Caco-2 (cell line): ENCODE measurements at regions of chr20 and their contacts with region 1.

Region 1: DNA sequence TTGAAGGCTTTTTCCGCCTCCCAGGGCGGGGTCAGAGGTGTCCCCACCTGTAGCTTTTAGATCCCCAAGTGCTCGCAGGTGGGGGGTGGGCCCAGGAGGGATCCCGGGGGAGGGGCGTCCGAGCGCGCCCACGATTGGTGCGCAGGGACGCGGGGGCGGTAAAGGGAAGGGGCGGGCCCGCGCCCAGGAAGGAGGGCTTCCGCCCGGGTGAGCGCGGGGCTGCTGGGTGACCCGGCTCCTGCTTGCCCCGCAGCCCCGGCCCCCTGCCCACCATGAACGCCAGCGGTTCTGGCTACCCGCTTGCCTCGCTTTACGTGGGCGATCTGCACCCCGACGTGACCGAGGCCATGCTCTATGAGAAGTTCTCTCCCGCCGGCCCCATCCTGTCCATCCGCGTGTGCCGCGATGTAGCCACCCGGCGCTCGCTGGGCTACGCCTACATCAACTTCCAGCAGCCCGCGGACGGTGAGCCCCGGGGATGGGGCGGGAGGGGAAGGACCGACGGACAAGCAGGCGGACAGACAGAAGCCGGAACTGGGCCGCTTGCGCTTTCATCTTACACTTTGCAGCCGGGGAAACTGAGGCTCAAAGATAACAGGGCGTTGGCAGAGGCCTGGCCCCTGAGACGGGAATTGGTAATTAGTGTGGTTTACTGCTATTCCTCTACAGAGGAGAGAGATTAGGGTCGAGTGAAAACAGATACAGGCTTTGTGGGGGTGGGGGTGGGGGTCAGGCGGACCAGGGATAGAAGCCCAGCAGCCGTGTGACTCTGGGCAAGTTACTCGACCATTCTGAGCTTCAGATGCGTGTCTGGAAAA is at the start of gene PABPC1L:
- DNase-seq: peak; percentile 95
- H3K4me3 ChIP-seq: peak within 1 kb of the TSS; percentile 82
- H3K4me3 Mint-ChIP-seq: peak within 1 kb of the TSS; percentile 85
- H3K27ac Mint-ChIP-seq: peak within 1 kb of the TSS; percentile 92
- H3K4me1 ChIP-seq: peaks cover 21% of the 10 kb centered on the region
- H3K4me1 Mint-ChIP-seq: peaks cover 19% of the 10 kb centered on the region
- H3K27me3 ChIP-seq: no peaks in the 10 kb centered on the region
- H3K27me3 Mint-ChIP-seq: no peaks in the 10 kb centered on the region
- CTCF ChIP-seq: no peak
- total RNA-seq, gene PABPC1L: 242 and 255 TPM in 2 replicates

Region 2: GRCh38 chr20:44692932-44693476 is 217.1 kb before region 1 on chr20:
- CTCF ChIA-PET with region 1: no interaction called
- POLR2A ChIA-PET with region 1: no interaction called
- intact Hi-C with region 1: loop called (anchors 1 kb)
- DNase-seq: peak; percentile 96 to 98
- H3K4me3 ChIP-seq: no peak overlapping the region
- H3K4me3 Mint-ChIP-seq: peak overlapping the region; percentile 64
- H3K27ac Mint-ChIP-seq: peak overlapping the region; percentile 87
- H3K4me1 ChIP-seq: peaks cover 21% of the 10 kb centered on the region
- H3K4me1 Mint-ChIP-seq: peaks cover 29% of the 10 kb centered on the region
- H3K27me3 ChIP-seq: no peaks in the 10 kb centered on the region
- H3K27me3 Mint-ChIP-seq: no peaks in the 10 kb centered on the region
- CTCF ChIP-seq: no peak

Region 3: DNA sequence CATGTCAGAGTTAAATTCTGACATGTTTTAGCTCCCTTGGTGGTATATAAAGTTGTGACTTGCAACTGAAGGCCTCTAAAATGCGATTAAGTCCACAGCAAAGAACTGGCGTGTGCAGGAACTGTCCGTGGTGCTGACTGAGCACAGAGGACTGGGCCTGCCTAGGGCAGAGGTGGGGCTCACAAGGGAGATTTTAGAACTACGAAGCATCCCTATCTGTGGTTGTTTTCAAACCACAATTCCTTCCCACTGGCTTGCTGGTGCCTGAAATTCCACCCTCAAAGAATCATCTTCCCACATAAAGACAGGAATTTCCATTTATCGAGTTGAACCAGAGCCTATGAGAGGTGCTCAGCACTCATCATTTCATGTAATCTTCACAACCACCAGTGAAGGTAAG is 129.9 kb before region 1 on chr20:
- CTCF ChIA-PET with region 1: no interaction called
- POLR2A ChIA-PET with region 1: no interaction called
- intact Hi-C with region 1: no loop called
- DNase-seq: peak; percentile 76 to 88
- H3K4me3 ChIP-seq: no peak overlapping the region
- H3K4me3 Mint-ChIP-seq: no peak overlapping the region
- H3K27ac Mint-ChIP-seq: no peak overlapping the region
- H3K4me1 ChIP-seq: no peaks in the 10 kb centered on the region
- H3K4me1 Mint-ChIP-seq: no peaks in the 10 kb centered on the region
- H3K27me3 ChIP-seq: no peaks in the 10 kb centered on the region
- H3K27me3 Mint-ChIP-seq: peaks cover 9% of the 10 kb centered on the region
- CTCF ChIP-seq: no peak

Region 4: DNA sequence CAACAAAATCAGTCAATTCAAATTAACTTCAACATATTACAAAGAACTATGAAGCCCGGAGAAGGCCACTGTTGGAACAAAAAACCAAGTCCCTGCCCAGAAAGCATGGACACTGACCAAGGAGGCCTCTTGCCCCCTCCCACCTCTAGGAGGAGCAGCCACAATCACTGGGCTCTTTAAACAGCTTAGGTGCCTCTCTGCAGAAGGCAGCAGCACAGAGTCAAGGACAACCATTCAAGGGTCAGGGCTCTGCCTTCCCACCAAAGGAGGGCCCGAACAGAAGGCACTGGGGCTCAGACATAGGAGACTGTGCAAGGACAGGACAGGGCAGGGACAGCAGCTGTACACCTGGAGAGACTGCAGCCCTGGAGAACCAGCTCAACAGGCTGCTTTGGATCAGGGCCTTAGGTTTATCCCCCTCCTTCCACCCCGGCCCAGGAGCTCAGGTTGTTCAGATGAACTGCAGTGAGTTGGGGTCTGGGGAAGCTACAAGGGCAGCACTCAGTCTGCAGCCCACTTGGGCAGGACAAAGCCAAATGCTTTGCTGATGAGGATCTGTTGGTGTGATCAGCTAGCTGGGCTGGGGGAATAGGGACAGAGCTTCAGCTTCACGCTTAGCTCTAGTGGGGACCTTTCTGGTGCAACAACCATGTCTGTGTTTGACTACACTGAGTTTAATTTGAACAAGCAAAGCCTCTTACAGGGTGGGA is 32.3 kb after region 1 on chr20:
- CTCF ChIA-PET with region 1: interaction called, 10 read pairs
- POLR2A ChIA-PET with region 1: interaction called, 7 read pairs
- intact Hi-C with region 1: no loop called
- DNase-seq: peak; percentile 68
- H3K4me3 ChIP-seq: no peak overlapping the region
- H3K4me3 Mint-ChIP-seq: no peak overlapping the region
- H3K27ac Mint-ChIP-seq: no peak overlapping the region
- H3K4me1 ChIP-seq: no peaks in the 10 kb centered on the region
- H3K4me1 Mint-ChIP-seq: peaks cover 6% of the 10 kb centered on the region
- H3K27me3 ChIP-seq: no peaks in the 10 kb centered on the region
- H3K27me3 Mint-ChIP-seq: no peaks in the 10 kb centered on the region
- CTCF ChIP-seq: peak; percentile 49 to 62

Region 5: DNA sequence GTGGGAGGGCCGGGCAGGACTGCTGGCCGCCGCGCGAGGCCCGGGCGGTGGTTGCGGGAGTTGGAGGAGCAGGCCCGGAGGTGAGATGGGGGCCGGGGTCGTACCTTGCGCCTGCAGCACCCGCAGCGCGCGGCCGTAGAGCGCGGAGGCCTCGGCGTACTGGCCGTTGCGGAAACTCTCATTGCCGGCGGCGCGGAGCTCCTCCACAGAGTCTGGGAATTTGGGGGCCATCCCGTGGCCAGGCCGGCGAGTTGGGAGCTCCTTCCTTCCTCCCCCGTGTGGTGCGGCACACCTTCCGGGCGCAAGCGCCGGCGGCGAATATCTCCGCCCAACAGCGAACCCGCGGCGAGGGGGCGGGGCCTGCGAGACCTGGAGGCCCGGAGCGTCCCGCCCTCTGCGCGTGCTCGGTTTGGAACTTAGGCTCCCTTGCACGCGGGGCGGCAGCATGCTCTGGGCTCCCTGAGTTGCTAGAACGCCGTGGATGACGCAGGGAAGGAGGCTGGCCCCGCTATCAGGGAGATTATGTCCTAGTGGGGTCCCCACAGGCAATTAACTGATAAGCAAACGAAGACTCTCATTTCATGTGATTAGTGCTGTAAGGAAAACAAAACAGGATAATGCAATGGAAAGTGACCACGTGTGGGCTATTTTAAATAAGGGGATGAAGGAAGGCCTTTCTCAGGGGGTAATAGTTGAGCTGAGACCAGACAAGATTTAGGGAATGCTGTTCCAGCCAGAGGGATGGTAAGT is 50.2 kb after region 1 on chr20 and contains the start of gene TOMM34:
- CTCF ChIA-PET with region 1: interaction called, 3 read pairs
- POLR2A ChIA-PET with region 1: interaction called, 8 read pairs
- intact Hi-C with region 1: loop called (anchors 1 kb)
- DNase-seq: peak; percentile 98 to 100
- H3K4me3 ChIP-seq: peak within 1 kb of the TSS; percentile 86
- H3K4me3 Mint-ChIP-seq: peak within 1 kb of the TSS; percentile 86
- H3K27ac Mint-ChIP-seq: peak within 1 kb of the TSS; percentile 75
- H3K4me1 ChIP-seq: peaks cover 60% of the 10 kb centered on the region
- H3K4me1 Mint-ChIP-seq: peaks cover 56% of the 10 kb centered on the region
- H3K27me3 ChIP-seq: no peaks in the 10 kb centered on the region
- H3K27me3 Mint-ChIP-seq: no peaks in the 10 kb centered on the region
- CTCF ChIP-seq: peak in 1 of 2 experiments; percentile 33
- total RNA-seq, gene TOMM34: 131 and 139 TPM in 2 replicates

Region 6: DNA sequence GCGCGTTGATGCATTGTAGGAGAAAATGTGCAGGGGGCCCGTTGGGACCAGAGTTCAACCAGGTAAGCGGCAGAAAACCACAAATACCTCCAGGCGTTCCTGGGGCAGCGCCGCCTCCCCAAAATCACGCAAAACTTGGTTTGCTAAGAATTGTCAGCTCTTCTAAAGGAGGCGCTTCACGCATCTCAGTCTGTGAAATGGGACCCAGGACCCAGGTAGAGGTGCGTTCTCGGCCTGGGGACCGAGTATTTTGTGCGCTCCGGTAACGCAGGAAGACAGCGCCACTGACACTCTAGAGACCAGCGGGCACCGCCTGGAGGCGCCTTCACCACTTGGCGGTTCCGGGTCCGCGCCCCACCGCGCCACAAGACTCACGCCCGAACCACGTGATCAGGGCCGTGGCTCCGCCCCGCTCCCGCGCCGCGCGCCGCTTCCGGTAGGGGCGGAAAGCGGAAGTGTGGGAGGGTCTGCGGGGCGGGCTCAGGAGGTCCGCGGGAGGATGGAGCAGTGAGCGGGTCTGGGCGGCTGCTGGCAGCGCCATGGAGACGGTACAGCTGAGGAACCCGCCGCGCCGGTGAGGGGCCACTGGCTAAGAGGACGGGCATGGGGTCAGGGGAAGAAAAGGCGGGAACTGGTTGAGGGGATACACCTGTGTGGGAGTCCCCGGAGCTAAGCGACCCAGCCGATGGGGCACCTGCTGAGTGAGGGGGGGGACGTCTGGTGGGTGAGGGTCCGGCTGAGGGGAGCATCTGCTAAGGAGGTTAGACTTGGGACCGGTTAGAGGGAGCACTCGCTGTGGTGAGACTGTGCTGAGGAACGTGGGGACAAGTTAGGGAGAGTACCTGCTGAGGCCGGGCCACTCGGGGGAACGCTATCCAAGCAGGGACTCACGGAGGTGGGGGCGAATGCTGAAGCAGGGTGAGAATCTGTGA is 56.2 kb after region 1 on chr20 and contains the start of gene STK4:
- CTCF ChIA-PET with region 1: no interaction called
- POLR2A ChIA-PET with region 1: interaction called, 8 read pairs
- intact Hi-C with region 1: loop called (anchors 2 kb)
- DNase-seq: peak; percentile 99 to 100
- H3K4me3 ChIP-seq: peak within 1 kb of the TSS; percentile 64
- H3K4me3 Mint-ChIP-seq: peak within 1 kb of the TSS; percentile 99
- H3K27ac Mint-ChIP-seq: peak within 1 kb of the TSS; percentile 94
- H3K4me1 ChIP-seq: peaks cover 39% of the 10 kb centered on the region
- H3K4me1 Mint-ChIP-seq: peaks cover 39% of the 10 kb centered on the region
- H3K27me3 ChIP-seq: no peaks in the 10 kb centered on the region
- H3K27me3 Mint-ChIP-seq: no peaks in the 10 kb centered on the region
- CTCF ChIP-seq: peak; percentile 40 to 90
- total RNA-seq, gene STK4: 68.3 and 74.7 TPM in 2 replicates

Region 7: GRCh38 chr20:45095753-45096371 is 185.8 kb after region 1 on chr20:
- CTCF ChIA-PET with region 1: no interaction called
- POLR2A ChIA-PET with region 1: no interaction called
- intact Hi-C with region 1: loop called (anchors 1 kb)
- DNase-seq: peak; percentile 84 to 87
- H3K4me3 ChIP-seq: no peak overlapping the region
- H3K4me3 Mint-ChIP-seq: no peak overlapping the region
- H3K27ac Mint-ChIP-seq: no peak overlapping the region
- H3K4me1 ChIP-seq: no peaks in the 10 kb centered on the region
- H3K4me1 Mint-ChIP-seq: no peaks in the 10 kb centered on the region
- H3K27me3 ChIP-seq: no peaks in the 10 kb centered on the region
- H3K27me3 Mint-ChIP-seq: no peaks in the 10 kb centered on the region
- CTCF ChIP-seq: peak; percentile 95 to 99